K562 (cell line): ENCODE measurements at regions of chr19 and their contacts with region 1.

Region 1: DNA sequence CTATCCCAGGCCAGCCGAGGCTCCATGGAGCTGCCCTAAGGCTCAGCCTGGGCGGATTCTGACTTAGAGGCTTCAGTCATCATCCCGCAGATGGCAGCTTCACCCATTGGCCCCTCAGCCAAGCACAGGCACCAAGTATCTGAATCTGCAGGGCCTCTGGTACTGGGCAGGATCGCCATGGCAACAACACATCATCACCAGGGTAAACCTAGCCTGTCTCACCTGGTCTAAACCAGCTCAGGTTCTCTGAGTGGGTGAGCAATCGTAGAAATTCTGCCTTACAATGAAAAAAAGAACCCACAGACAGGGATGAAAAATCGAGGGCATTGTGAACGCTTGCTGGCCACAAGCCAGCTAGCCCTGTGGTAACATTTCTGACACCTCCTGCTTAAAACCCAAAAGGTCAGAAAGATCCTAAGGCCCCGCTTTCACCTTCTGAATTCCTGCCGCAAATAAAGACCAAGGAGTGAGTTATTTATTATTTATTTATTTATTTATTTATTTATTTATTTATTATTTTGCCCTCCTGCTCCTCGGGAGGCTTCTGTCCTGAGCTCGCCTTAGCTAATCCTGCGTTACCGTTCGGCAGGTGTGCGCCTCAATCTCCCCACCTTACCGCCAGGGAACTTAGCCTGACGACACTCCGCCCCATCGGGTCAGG is 12.0 kb upstream of the CEACAM21 start:
- DNase-seq: no peak
- ATAC-seq: no peak; the same call in 1 of the 3 replicates
- H3K4me3 ChIP-seq: no peak overlapping the region
- H3K27ac ChIP-seq: no peak overlapping the region
- H3K4me1 ChIP-seq: peaks cover 0 to 9% of the 10 kb centered on the region in 2 experiments; a peak in 2 of 5 replicates
- H3K27me3 ChIP-seq: peaks cover 9 to 20% of the 10 kb centered on the region in 2 experiments; a peak in 3 of 5 replicates
- CTCF ChIP-seq: no peak
- EP300 ChIP-seq: no peak
- POLR2A ChIP-seq: no peak
- RAD21 ChIP-seq: no peak

Region 2: DNA sequence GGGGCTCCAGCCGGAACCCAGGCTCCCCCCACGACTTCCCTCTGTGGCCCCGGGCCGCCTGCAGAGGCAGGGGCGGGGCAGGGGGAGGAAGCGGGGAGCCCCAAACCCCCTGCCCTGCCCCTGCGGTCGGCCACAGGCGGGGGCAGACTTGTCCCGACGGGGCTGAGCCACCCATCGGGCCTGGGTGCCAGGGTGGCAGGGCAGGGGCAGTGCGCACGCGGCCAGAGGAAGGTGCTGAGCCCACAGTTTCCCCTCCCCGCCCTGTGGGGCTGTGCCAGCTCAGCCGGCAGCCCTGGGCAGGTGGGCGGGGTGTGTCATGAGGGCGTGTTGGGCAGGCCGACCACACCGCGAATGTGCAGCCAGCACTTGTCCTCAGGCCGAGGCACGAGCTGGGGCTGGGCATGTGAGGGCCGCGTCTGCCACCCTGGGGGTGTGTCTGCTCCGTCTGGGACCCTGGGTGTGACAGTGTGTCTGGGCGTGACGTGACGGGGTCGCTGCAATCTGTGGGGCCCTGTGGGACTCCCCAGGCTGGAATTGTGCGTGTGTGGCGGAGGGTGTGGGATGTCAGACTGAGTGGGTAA is 236.3 kb before region 1 on chr19:
- CTCF ChIA-PET with region 1: no interaction called
- POLR2A ChIA-PET with region 1: no interaction called
- in situ Hi-C with region 1: loop called (anchors 25 kb)
- intact Hi-C with region 1: loop called (anchors 10 kb)
- DNase-seq: peak in 2 of 4 experiments; percentile 30 to 40
- ATAC-seq: no peak
- H3K4me3 ChIP-seq: no peak overlapping the region
- H3K27ac ChIP-seq: peak overlapping the region; percentile 55; the same call in 2 of the 3 replicates
- H3K4me1 ChIP-seq: peaks cover 52 to 65% of the 10 kb centered on the region in 2 experiments
- H3K27me3 ChIP-seq: no peaks in the 10 kb centered on the region
- CTCF ChIP-seq: no peak
- EP300 ChIP-seq: no peak
- POLR2A ChIP-seq: no peak
- RAD21 ChIP-seq: no peak

Region 3: DNA sequence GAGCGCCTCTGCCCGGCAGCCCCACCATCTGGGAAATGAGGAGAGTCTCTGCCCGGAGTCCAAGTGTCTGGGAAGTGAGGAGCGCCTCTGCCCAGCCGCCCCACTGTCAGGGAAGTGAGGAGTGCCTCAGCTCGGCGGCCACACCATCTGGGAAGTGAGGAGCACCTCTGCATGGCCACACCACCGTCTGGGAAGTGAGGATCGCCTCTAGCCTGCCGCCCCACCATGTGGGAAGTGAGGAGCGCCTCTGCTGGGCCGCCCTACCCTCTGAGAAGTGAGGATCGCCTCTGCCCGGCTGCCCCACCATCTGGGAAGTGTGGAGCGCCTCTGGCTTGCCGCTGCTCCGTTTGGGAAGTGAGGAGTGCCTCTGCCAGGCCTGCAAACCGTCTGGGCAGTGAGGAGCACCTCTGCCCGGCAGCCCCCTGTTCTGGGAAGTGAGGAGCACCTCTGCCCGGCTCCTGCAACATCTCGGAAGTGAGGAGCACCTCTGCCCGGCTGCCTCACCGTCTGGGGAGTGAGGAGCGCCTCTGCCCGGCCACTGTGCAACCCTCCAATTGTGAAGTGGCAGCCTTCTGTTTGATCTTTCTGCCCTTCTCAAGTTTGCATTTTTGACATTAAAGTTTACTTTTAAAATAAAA is 48.9 kb before region 1 on chr19:
- CTCF ChIA-PET with region 1: no interaction called
- POLR2A ChIA-PET with region 1: no interaction called
- in situ Hi-C with region 1: no loop called
- intact Hi-C with region 1: no loop called
- DNase-seq: no peak
- ATAC-seq: no peak
- H3K4me3 ChIP-seq: no peak overlapping the region
- H3K27ac ChIP-seq: no peak overlapping the region
- H3K4me1 ChIP-seq: no peaks in the 10 kb centered on the region
- H3K27me3 ChIP-seq: peaks cover 21 to 38% of the 10 kb centered on the region in 2 experiments; a peak in 3 of 5 replicates
- CTCF ChIP-seq: no peak
- EP300 ChIP-seq: no peak
- POLR2A ChIP-seq: no peak
- RAD21 ChIP-seq: no peak

Region 4: GRCh38 chr19:42468273-42468796 is 904.4 kb after region 1 on chr19:
- CTCF ChIA-PET with region 1: no interaction called
- POLR2A ChIA-PET with region 1: no interaction called
- in situ Hi-C with region 1: no loop called
- intact Hi-C with region 1: no loop called
- DNase-seq: no peak
- ATAC-seq: no peak
- H3K4me3 ChIP-seq: no peak overlapping the region
- H3K27ac ChIP-seq: no peak overlapping the region
- H3K4me1 ChIP-seq: no peaks in the 10 kb centered on the region; a peak in 1 of 5 replicates
- H3K27me3 ChIP-seq: peaks cover 39 to 51% of the 10 kb centered on the region in 2 experiments; a peak in 4 of 5 replicates
- CTCF ChIP-seq: no peak
- EP300 ChIP-seq: no peak
- POLR2A ChIP-seq: no peak
- RAD21 ChIP-seq: no peak